Dorsolateral prefrontal cortex (tissue), 120 donors: ENCODE measurements at regions of chr12 and their contacts with region 1.

Region 1: GRCh38 chr12:94566345-94566744 is 84.0 kb downstream of the TMCC3 start:
- DNase-seq: peak in 9 of 10 donors; percentile 72 to 93 (median 83)
- H3K4me3 ChIP-seq: peak overlapping the region in 3 of 59 donors; percentile 10 to 17 (median 14)
- H3K27ac ChIP-seq: peak overlapping the region in 54 of 59 donors; percentile 1 to 82 (median 60)
- H3K27me3 ChIP-seq: peaks cover 0 to 3% (median 0%) of the 10 kb centered on the region in 45 donors
- CTCF ChIP-seq: peak in 12 of 56 donors; percentile 9 to 40 (median 14)

Region 2: GRCh38 chr12:94609917-94610443 is 43.6 kb after region 1 on chr12:
- intact Hi-C with region 1: loop called (anchors 5 kb)
- DNase-seq: no peak
- H3K4me3 ChIP-seq: no peak overlapping the region
- H3K27ac ChIP-seq: peak overlapping the region in 19 of 59 donors; percentile 2 to 98 (median 34)
- H3K27me3 ChIP-seq: no peaks in the 10 kb centered on the region
- CTCF ChIP-seq: no peak